ENCODE measurements at regions of chr15 and their contacts with region 1.

Region 1: DNA sequence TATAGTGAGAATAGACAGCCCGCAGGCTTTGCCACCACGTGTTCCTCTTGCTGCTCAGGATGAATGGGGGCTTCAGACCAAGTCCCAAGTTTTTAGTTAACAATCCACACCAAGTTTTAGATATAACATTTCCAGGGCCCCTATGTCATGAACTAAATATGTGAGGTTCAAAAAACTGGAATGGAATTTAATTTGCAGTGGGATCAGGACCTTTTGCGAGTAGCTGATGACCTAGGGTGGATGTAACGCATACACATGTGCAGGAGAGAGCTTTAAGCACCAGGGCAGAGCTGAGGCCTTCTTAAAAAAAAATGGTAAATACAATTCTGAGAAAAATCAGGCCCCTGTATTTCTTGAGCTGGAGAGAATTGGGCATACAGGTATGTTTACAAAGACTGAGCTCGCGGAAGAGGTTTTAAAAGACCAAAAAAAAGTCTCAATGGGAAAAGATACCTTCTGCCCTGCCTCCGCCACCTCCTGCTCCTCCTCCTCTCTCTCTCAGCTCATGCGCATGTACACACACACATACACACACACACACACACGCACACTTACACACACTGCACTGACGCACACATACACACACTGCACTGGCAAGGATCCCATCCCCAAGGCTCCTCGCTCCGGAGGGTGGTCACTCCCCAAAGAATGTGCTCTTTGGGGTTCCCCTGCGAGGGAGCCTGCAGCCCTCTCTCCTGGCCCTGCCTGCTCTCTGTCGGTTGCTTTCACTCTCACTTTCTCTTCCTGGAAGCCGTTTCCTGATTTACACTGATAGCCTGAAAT is 48.2 kb upstream of the IGF1R start:
- DNase-seq: peak; percentile 67
- ATAC-seq: peak; percentile 86
- H3K4me3 Mint-ChIP-seq: peak overlapping the region; percentile 88
- H3K27ac Mint-ChIP-seq: peak overlapping the region; percentile 95
- H3K4me1 Mint-ChIP-seq: peaks cover 27% of the 10 kb centered on the region
- H3K27me3 Mint-ChIP-seq: no peaks in the 10 kb centered on the region

Region 2: GRCh38 chr15:98647774-98648653 is 47.9 kb after region 1 on chr15 and contains the start of gene IGF1R:
- POLR2A ChIA-PET with region 1: interaction called, 13 read pairs
- DNase-seq: peak; percentile 97
- ATAC-seq: peak; percentile 65
- H3K4me3 Mint-ChIP-seq: peak within 1 kb of the TSS; percentile 87
- H3K27ac Mint-ChIP-seq: peak within 1 kb of the TSS; percentile 90
- H3K4me1 Mint-ChIP-seq: peaks cover 22% of the 10 kb centered on the region
- H3K27me3 Mint-ChIP-seq: peaks cover 50% of the 10 kb centered on the region
- total RNA-seq, gene IGF1R: 21.5 to 23.4 TPM